Upper lobe of right lung (tissue), 1 donor: ENCODE measurements at regions of chr22 and their contacts with region 1.

Region 1: GRCh38 chr22:37199103-37199759 is 11.2 kb upstream of the C1QTNF6 start:
- DNase-seq: peak; percentile 99
- ATAC-seq: peak; percentile 96
- H3K4me3 ChIP-seq: peak overlapping the region; percentile 72
- H3K27ac ChIP-seq: peak overlapping the region; percentile 91
- H3K4me1 ChIP-seq: peaks cover 32% of the 10 kb centered on the region
- H3K27me3 ChIP-seq: no peaks in the 10 kb centered on the region
- CTCF ChIP-seq: peak; percentile 91

Region 2: GRCh38 chr22:37077884-37078485 is 121.2 kb before region 1 on chr22:
- intact Hi-C with region 1: loop called (anchors 5 kb)
- DNase-seq: peak; percentile 86
- ATAC-seq: peak; percentile 73
- H3K4me3 ChIP-seq: no peak overlapping the region
- H3K27ac ChIP-seq: no peak overlapping the region
- H3K4me1 ChIP-seq: peaks cover 11% of the 10 kb centered on the region
- H3K27me3 ChIP-seq: peaks cover 22% of the 10 kb centered on the region
- CTCF ChIP-seq: peak; percentile 98

Region 3: DNA sequence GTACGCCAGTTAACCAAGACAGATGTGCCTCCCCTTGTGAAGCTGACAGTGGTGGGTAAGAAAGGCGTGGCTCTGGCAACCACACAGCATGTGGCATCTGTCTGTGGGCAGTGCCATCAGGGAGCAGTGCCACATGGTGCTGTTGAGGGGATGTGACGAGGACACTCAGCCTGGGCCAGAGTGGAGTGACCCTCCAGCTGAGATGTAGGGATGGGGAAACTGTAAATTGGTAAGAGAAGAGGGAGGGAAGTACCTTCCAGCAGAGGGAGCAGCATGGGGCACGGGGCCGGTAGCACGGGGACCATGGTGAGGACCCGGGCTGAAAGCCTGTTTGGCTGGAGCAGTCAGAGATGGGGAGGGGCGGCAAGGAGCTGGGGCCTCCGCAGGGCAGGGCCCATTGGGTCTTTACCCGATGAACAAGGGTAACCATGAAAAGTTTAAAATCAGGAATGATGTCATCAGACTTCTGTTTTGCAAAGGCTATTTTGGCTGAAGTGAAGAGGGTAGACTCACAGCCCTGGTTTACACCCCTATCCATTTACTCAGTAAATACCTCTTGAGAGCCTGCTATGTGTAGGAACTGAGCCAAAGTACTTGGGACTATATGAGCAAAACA is 100.1 kb before region 1 on chr22:
- intact Hi-C with region 1: no loop called
- DNase-seq: no peak
- ATAC-seq: peak; percentile 61
- H3K4me3 ChIP-seq: no peak overlapping the region
- H3K27ac ChIP-seq: no peak overlapping the region
- H3K4me1 ChIP-seq: no peaks in the 10 kb centered on the region
- H3K27me3 ChIP-seq: peaks cover 25% of the 10 kb centered on the region
- CTCF ChIP-seq: peak; percentile 16